ENCODE measurements at regions of chr6 and their contacts with region 1.

Region 1: GRCh38 chr6:225121-225721 is 67.1 kb upstream of the DUSP22 start:
- DNase-seq: peak; percentile 90
- H3K4me3 Mint-ChIP-seq: peak overlapping the region; percentile 54
- H3K27ac Mint-ChIP-seq: peak overlapping the region; percentile 96
- H3K4me1 Mint-ChIP-seq: peaks cover 72% of the 10 kb centered on the region
- H3K27me3 Mint-ChIP-seq: peaks cover 12% of the 10 kb centered on the region

Region 2: DNA sequence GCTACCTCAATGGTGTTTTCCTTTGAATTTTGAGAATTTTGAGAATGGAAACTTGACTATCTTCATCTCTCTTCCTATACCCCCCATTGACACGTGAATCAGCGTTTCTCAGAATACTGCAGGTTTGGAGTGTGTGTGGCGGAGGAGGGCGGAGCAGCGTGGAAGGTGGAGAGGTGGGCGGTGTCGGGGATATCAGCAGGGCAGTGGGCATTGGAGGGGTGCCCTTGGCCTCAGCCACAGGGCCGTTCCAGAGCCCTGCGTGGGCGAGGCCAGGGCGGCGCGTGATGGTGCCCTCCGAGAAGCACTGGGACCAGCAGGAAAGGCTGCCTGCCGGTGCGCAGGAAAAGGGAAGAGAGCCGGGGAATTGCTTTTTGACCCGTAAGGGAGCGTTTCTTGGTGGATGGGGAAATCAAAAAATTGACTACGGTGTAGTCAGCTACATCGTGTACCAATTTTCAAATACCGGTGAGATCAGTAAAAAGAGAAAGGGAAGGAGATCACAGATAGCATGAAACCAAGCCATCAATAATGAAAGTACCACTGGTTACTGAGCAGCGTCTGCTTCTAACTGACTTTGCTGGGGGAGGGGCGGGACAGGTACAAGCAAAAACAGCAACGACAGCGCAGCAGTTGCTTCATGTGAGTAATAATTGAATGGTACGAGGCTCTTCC is 15.7 kb before region 1 on chr6:
- CTCF ChIA-PET with region 1: interaction called, 4 read pairs
- POLR2A ChIA-PET with region 1: interaction called, 5 read pairs
- intact Hi-C with region 1: loop called (anchors 1 kb)
- DNase-seq: peak; percentile 90
- H3K4me3 Mint-ChIP-seq: peak overlapping the region; percentile 66
- H3K27ac Mint-ChIP-seq: peak overlapping the region; percentile 73
- H3K4me1 Mint-ChIP-seq: peaks cover 30% of the 10 kb centered on the region
- H3K27me3 Mint-ChIP-seq: peaks cover 33% of the 10 kb centered on the region

Region 3: GRCh38 chr6:291697-292505 is 66.7 kb after region 1 on chr6 and contains the start of gene DUSP22:
- CTCF ChIA-PET with region 1: no interaction called
- POLR2A ChIA-PET with region 1: interaction called, 3 read pairs
- intact Hi-C with region 1: loop called (anchors 1 kb)
- DNase-seq: peak; percentile 87
- H3K4me3 Mint-ChIP-seq: peak within 1 kb of the TSS; percentile 91
- H3K27ac Mint-ChIP-seq: peak within 1 kb of the TSS; percentile 92
- H3K4me1 Mint-ChIP-seq: peaks cover 43% of the 10 kb centered on the region
- H3K27me3 Mint-ChIP-seq: peaks cover 1% of the 10 kb centered on the region
- total RNA-seq, gene DUSP22: 28.0 to 28.7 TPM

Region 4: DNA sequence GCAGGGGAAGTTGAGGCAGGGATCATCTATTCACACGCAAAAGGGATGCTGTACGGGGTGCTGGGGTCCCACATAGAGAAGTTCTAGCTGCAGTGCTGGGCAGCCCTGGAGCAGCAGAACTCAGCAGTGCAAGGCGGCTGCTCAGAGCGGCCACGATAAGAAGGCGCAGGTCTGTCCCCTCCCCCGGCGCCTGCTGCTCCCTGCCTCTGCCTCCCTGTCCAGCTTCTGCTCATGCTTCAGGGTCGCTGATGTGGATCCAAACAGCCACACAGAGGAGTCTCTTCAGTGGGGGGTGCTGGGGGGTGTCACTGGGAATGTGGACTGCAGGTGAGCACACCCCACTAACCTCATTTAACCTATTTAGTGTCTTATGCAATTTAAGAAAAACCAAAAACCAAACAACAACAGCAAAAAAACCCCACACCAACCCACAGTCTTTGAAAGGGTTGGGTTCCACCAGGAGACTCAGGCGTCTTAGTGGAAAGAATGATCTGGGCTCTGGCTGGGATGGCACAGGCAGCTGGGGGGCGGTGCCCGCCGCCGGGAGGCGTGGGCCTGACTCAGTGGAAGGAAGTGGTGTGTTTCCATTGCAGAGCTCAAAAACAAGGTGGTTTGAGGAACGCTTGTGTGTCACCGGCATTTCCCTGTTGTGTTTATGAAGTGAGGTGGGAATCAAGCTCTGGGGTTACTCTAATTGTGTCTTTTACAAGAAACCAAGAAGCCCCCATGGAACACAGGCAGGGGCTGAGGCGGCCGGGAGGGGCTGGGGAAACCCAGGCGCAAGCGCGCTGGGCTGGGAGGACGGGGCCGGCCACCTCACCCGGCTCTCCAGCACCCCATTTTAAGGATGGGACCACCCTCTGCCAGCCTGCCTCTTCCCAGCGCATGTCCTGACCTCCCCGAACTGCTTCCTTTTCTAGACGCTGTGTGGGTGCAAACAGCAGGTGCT is 221.5 kb after region 1 on chr6:
- CTCF ChIA-PET with region 1: no interaction called
- POLR2A ChIA-PET with region 1: no interaction called
- intact Hi-C with region 1: loop called (anchors 2 kb)
- DNase-seq: peak; percentile 97
- H3K4me3 Mint-ChIP-seq: peak overlapping the region; percentile 77
- H3K27ac Mint-ChIP-seq: peak overlapping the region; percentile 97
- H3K4me1 Mint-ChIP-seq: peaks cover 55% of the 10 kb centered on the region
- H3K27me3 Mint-ChIP-seq: peaks cover 1% of the 10 kb centered on the region

Region 5: DNA sequence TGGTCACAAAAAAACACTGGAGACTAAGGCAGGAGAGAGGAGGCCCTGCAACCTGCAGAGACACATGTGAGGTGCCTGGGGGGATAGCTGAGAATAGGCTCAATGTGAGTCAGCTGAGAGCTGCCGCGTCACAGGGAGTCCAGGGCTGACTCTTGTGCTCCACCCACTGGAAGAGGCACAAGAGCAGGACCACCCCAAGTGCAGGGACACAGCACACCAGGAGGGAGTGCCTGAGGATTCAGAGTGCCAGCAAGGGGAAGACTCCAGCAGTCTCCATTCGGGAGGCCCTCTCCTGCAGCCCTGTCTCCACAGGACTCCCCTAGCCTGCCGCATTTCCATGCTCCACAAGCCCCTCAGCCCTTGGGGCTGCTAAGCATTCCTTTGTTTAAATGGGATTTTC is 326.2 kb after region 1 on chr6:
- CTCF ChIA-PET with region 1: interaction called, 5 read pairs
- POLR2A ChIA-PET with region 1: interaction called, 3 read pairs
- intact Hi-C with region 1: loop called (anchors 1 kb)
- DNase-seq: peak; percentile 68
- H3K4me3 Mint-ChIP-seq: no peak overlapping the region
- H3K27ac Mint-ChIP-seq: peak overlapping the region; percentile 97
- H3K4me1 Mint-ChIP-seq: peaks cover 69% of the 10 kb centered on the region
- H3K27me3 Mint-ChIP-seq: no peaks in the 10 kb centered on the region

Region 6: GRCh38 chr6:1131285-1132079 is 906.3 kb after region 1 on chr6:
- CTCF ChIA-PET with region 1: no interaction called
- POLR2A ChIA-PET with region 1: no interaction called
- intact Hi-C with region 1: no loop called
- DNase-seq: no peak
- H3K4me3 Mint-ChIP-seq: no peak overlapping the region
- H3K27ac Mint-ChIP-seq: no peak overlapping the region
- H3K4me1 Mint-ChIP-seq: peaks cover 3% of the 10 kb centered on the region
- H3K27me3 Mint-ChIP-seq: peaks cover 3% of the 10 kb centered on the region